Activated naive CD4-positive, alpha-beta T cell treated with anti-CD3 and anti-CD28 coated beads for 36 hours (primary cell): ENCODE measurements at regions of chr6 and their contacts with region 1.

Region 1: GRCh38 chr6:127748290-127748689 is 152.6 kb downstream of the THEMIS start:
- DNase-seq: no peak
- H3K4me3 Mint-ChIP-seq: peak overlapping the region; percentile 62
- H3K27ac Mint-ChIP-seq: peak overlapping the region; percentile 83
- H3K4me1 Mint-ChIP-seq: peaks cover 61% of the 10 kb centered on the region
- H3K27me3 Mint-ChIP-seq: no peaks in the 10 kb centered on the region

Region 2: DNA sequence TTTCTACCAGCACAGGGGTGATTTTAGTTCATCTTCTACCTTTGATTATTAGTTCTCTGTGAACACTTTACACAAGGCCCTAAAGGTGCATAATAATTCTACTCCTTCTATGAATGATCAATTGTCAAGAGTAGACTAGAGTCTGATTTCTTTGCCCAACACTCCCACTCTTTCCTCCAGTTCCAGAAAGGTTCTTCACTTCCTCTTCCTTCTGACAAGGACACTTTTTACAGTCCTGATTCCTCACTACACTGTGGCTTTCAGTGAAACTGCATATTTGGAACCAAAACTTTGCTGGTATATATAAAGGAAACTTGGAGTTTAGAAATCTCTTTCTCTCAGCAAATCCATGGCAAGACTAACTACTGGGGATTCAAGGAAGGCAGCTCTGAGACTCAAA is 640.4 kb before region 1 on chr6:
- CTCF ChIA-PET with region 1: no interaction called
- intact Hi-C with region 1: no loop called
- DNase-seq: no peak
- H3K4me3 Mint-ChIP-seq: no peak overlapping the region
- H3K27ac Mint-ChIP-seq: no peak overlapping the region
- H3K4me1 Mint-ChIP-seq: no peaks in the 10 kb centered on the region
- H3K27me3 Mint-ChIP-seq: peaks cover 18% of the 10 kb centered on the region

Region 3: GRCh38 chr6:127775371-127775770 is 27.1 kb after region 1 on chr6:
- CTCF ChIA-PET with region 1: no interaction called
- intact Hi-C with region 1: loop called (anchors 1 kb)
- DNase-seq: no peak
- H3K4me3 Mint-ChIP-seq: no peak overlapping the region
- H3K27ac Mint-ChIP-seq: peak overlapping the region; percentile 72
- H3K4me1 Mint-ChIP-seq: peaks cover 59% of the 10 kb centered on the region
- H3K27me3 Mint-ChIP-seq: no peaks in the 10 kb centered on the region

Region 4: GRCh38 chr6:127784468-127784867 is 36.2 kb after region 1 on chr6:
- CTCF ChIA-PET with region 1: no interaction called
- intact Hi-C with region 1: loop called (anchors 1 kb)
- DNase-seq: peak; percentile 59
- H3K4me3 Mint-ChIP-seq: peak overlapping the region; percentile 5
- H3K27ac Mint-ChIP-seq: peak overlapping the region; percentile 71
- H3K4me1 Mint-ChIP-seq: peaks cover 76% of the 10 kb centered on the region
- H3K27me3 Mint-ChIP-seq: no peaks in the 10 kb centered on the region

Region 5: GRCh38 chr6:127792616-127793015 is 44.3 kb after region 1 on chr6:
- CTCF ChIA-PET with region 1: no interaction called
- intact Hi-C with region 1: loop called (anchors 2 kb)
- DNase-seq: no peak
- H3K4me3 Mint-ChIP-seq: peak overlapping the region; percentile 14
- H3K27ac Mint-ChIP-seq: peak overlapping the region; percentile 47
- H3K4me1 Mint-ChIP-seq: peaks cover 77% of the 10 kb centered on the region
- H3K27me3 Mint-ChIP-seq: no peaks in the 10 kb centered on the region